Adrenal gland (tissue), 19 donors: ENCODE measurements at regions of chr4 and their contacts with region 1.

Region 1: GRCh38 chr4:55948726-55949474 is at the start of gene CEP135:
- DNase-seq: peak; percentile 95 to 97 (median 97)
- H3K4me3 ChIP-seq: peak within 1 kb of the TSS in 3 of 4 donors; percentile 57 to 91 (median 88)
- H3K27ac ChIP-seq: peak within 1 kb of the TSS; percentile 73 to 96 (median 93)
- H3K4me1 ChIP-seq: peaks cover 0 to 18% of the 10 kb centered on the region in 2 donors
- H3K27me3 ChIP-seq: no peaks in the 10 kb centered on the region
- CTCF ChIP-seq: peak; percentile 71 to 96 (median 90)
- POLR2A ChIP-seq: peak in 1 of 2 donors; percentile 54
- total RNA-seq, gene CEP135: 1.4 to 7.5 (median 3.9) TPM

Region 2: GRCh38 chr4:55546756-55547465 is 402.0 kb before region 1 on chr4 and contains the start of gene CLOCK:
- intact Hi-C with region 1: no loop called
- DNase-seq: peak; percentile 85 to 91 (median 90)
- H3K4me3 ChIP-seq: peak within 1 kb of the TSS; percentile 85 to 96 (median 92)
- H3K27ac ChIP-seq: peak within 1 kb of the TSS; percentile 77 to 99 (median 97)
- H3K4me1 ChIP-seq: peaks cover 10 to 18% of the 10 kb centered on the region in 2 donors
- H3K27me3 ChIP-seq: no peaks in the 10 kb centered on the region
- CTCF ChIP-seq: peak in 5 of 6 experiments; percentile 26 to 69 (median 59)
- POLR2A ChIP-seq: peak; percentile 61 to 78
- total RNA-seq, gene CLOCK: 17.6 to 37.0 (median 30.6) TPM

Region 3: GRCh38 chr4:55684274-55684673 is 264.6 kb before region 1 on chr4:
- intact Hi-C with region 1: no loop called
- DNase-seq: no peak
- H3K4me3 ChIP-seq: no peak overlapping the region
- H3K27ac ChIP-seq: no peak overlapping the region
- H3K4me1 ChIP-seq: no peaks in the 10 kb centered on the region
- H3K27me3 ChIP-seq: no peaks in the 10 kb centered on the region
- CTCF ChIP-seq: no peak
- POLR2A ChIP-seq: no peak

Region 4: DNA sequence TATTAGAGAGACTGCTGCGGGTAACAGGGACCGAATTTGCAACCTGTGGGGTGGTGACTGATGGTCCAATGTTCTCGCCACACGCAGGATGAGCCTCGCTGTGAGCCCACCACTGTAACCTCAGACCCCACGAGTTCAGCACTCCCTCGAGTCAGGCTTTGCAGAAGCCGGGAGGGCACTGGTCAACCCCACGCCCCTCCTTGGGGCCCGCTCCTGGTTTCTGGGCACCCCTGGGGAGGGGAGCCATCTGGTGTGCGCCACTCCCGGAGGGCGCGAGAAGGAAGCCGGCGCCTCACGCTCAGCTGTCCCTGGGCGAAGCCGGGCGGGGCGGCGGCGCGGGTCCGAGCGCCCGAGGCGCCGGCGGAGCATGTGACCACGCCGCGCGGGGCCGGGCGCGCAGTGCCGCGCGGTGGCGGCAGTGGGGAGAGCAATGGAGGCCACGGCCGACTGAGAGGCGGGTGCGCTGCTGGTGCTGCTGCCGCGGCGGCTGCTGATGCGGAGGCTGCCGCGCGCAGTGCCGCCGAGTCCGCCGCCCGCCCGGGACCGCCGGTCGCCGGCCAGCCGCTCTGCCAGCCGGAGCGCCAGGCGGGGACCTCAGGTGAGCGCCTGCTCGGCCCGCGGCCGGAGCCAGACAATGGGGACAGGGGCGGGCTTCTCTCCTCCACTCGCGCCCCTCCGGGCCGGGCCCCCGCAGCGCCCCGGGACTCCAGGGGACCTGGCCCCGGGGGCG is 100.0 kb after region 1 on chr4:
- intact Hi-C with region 1: no loop called
- DNase-seq: peak; percentile 22 to 67 (median 38)
- H3K4me3 ChIP-seq: peak overlapping the region in 3 of 4 donors; percentile 18 to 67 (median 19)
- H3K27ac ChIP-seq: peak overlapping the region in 1 of 5 donors; percentile 49
- H3K4me1 ChIP-seq: peaks cover 6 to 7% of the 10 kb centered on the region in 2 donors
- H3K27me3 ChIP-seq: no peaks in the 10 kb centered on the region
- CTCF ChIP-seq: peak in 3 of 6 experiments; percentile 34 to 48 (median 46)
- POLR2A ChIP-seq: no peak

Region 5: DNA sequence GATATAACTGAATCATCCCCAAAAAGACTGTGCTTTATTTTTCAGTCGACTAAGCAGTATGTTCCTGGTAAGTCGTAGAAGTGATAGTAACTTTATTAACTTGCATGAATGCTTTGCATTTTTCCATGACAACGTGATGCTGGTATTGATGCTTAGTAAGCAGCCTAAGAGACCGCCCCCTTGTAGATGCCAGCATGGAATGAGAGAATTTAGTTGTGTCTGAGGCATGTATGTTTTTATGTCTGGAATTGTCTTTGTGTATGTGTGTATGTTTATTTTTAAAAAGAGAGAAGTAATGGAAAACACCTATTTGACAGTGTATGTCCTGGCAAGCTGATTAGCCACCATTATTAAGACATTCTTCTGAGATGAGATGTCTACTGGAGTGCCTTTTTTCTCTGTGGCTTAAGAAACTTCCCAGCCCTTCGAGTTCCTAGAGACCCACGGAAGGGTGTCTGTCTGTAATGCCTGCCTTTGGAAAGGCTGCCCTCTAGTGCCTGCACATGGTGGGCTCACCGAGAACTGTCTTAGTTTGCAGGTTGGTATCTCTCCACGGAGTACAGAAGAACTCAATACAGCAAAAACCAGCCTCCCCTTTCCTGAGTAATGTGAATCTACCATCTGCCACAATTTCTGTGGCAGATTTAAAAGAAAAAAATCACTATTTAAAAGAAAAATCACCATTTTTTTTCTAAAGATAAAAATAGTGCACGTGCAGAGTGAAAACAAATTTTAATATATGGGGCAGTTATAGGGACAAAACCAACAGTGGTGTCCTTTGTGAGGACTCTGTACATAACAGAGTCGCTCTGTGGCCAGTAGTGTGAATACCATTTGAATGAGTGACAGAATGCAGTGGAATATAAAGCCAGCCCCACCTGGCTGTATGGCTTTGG is 352.5 kb after region 1 on chr4:
- intact Hi-C with region 1: loop called (anchors 5 kb)
- DNase-seq: peak; percentile 73 to 94 (median 78)
- H3K4me3 ChIP-seq: no peak overlapping the region
- H3K27ac ChIP-seq: no peak overlapping the region
- H3K4me1 ChIP-seq: no peaks in the 10 kb centered on the region
- H3K27me3 ChIP-seq: no peaks in the 10 kb centered on the region
- CTCF ChIP-seq: peak; percentile 73 to 89 (median 82)
- POLR2A ChIP-seq: no peak